Activated B cell treated with CpG ODN at 0.5 μM for 24 hours (primary cell): ENCODE measurements at regions of chr18 and their contacts with region 1.

Region 1: DNA sequence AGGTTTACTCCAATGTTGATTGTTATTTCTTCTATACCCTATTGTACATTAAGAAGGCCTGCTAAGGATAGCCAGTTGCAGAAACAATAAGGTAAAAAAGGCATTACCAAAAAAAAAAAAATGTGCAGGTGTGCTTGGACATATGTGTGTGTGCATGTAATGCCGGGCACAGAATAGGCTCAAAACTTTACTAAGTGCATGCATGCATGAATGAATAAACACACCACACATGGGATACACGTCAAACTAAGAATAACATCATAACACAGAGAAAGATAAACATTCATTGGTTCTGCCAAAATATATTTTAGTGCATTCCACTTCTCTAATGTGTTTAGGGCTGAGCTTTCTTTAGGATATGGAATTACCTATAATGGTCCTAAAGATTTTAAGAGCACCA is 298.2 kb downstream of the TCF4 start:
- DNase-seq: no peak
- ATAC-seq: peak; percentile 56
- H3K4me3 Mint-ChIP-seq: no peak overlapping the region
- H3K27ac Mint-ChIP-seq: peak overlapping the region; percentile 47
- H3K4me1 Mint-ChIP-seq: peaks cover 81% of the 10 kb centered on the region
- H3K27me3 Mint-ChIP-seq: no peaks in the 10 kb centered on the region
- CTCF ChIP-seq: no peak

Region 2: GRCh38 chr18:53534695-53535094 is 1755.1 kb before region 1 on chr18:
- CTCF ChIA-PET with region 1: no interaction called
- POLR2A ChIA-PET with region 1: no interaction called
- intact Hi-C with region 1: no loop called
- DNase-seq: no peak
- ATAC-seq: no peak
- H3K4me3 Mint-ChIP-seq: no peak overlapping the region
- H3K27ac Mint-ChIP-seq: no peak overlapping the region
- H3K4me1 Mint-ChIP-seq: no peaks in the 10 kb centered on the region
- H3K27me3 Mint-ChIP-seq: no peaks in the 10 kb centered on the region
- CTCF ChIP-seq: no peak

Region 3: DNA sequence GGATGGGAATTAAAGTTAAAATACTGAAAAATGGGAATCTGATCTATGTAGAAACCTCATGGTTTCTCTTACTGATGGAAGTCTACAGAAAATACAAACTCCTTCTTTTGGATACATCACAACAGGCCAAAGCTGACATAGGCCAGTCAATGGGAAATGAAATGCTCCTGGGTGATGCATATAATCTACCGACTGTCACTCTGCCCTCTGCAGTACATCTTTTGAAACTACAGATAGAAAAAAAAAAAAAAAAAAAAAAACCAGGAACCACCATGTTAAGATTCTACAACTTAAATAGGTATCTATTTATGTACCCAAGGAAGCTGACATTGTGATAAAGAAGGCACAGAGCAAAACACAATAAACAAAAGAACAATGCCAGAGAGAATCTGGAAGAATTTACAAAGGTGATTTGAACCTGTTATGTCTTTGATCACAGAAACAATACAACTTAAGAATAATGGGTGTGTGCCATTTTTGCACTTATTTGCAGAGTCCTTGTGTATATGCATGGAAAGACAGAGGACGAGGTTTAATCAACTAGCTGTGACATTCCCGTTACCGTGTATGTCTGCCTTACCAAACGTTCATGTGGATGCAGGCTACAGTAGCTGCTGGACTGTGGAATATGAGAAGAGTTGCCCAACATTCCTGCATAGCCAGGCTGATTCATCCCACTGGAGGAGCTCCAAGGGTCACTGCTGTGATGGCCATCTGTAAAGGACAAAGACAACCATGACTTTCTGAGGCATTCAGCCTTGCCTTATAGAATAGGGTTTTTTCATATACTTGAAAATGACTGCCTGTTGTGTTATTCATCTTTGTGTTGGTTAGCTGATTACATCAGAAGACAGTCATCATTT is 14.5 kb before region 1 on chr18:
- CTCF ChIA-PET with region 1: interaction called, 3 read pairs
- POLR2A ChIA-PET with region 1: interaction called, 3 read pairs
- intact Hi-C with region 1: loop called (anchors 1 kb)
- DNase-seq: no peak
- ATAC-seq: peak; percentile 73
- H3K4me3 Mint-ChIP-seq: no peak overlapping the region
- H3K27ac Mint-ChIP-seq: peak overlapping the region; percentile 57
- H3K4me1 Mint-ChIP-seq: peaks cover 49% of the 10 kb centered on the region
- H3K27me3 Mint-ChIP-seq: no peaks in the 10 kb centered on the region
- CTCF ChIP-seq: no peak

Region 4: DNA sequence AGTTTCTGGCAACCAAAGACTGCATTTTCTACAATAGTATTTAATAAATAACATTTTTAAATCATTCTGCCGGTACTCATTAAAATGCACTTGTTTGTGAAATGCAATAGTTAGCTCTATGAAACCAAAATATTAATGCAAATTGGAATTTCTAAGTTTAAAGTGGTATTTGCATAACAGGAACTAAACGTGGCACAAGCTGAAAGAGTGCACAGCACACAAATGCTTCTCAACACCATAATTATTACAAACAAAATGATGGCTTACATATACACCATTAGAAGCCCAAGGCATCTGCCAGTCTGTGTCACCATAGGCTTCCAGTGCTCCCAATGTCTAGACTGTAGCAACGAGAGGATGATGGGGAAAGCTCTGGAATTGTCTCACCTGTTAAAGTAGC is 17.7 kb after region 1 on chr18:
- CTCF ChIA-PET with region 1: no interaction called
- POLR2A ChIA-PET with region 1: no interaction called
- intact Hi-C with region 1: loop called (anchors 2 kb)
- DNase-seq: no peak
- ATAC-seq: peak; percentile 42
- H3K4me3 Mint-ChIP-seq: peak overlapping the region; percentile 56
- H3K27ac Mint-ChIP-seq: peak overlapping the region; percentile 21
- H3K4me1 Mint-ChIP-seq: peaks cover 95% of the 10 kb centered on the region
- H3K27me3 Mint-ChIP-seq: no peaks in the 10 kb centered on the region
- CTCF ChIP-seq: no peak